ENCODE measurements at regions of chr2 and their contacts with region 1.

Region 1: DNA sequence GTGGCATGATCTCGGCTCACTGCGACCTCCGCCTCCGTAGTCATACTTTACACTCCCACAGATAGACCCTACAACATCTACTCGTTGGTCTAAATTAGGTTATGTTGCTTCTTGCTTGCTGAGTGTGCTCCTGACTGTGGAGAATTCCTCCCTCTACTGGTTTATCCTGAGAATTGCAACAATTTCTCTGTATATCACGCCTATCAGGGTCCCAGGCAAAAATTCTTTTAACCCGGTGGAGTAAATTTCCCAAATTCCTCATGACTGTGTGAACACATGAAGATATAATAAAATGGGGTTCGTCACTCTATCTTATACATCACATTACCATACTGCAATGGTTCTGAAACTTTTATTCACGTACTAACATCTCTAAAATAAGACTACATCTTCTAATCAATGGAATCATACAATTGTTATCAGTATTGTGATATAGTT is 156.7 kb downstream of the EVA1A start:
- DNase-seq: peak; percentile 61
- ATAC-seq: peak; percentile 97
- H3K4me3 ChIP-seq: no peak overlapping the region
- H3K27ac ChIP-seq: no peak overlapping the region
- H3K4me1 ChIP-seq: no peaks in the 10 kb centered on the region
- H3K27me3 ChIP-seq: no peaks in the 10 kb centered on the region
- CTCF ChIP-seq: peak; percentile 91
- EP300 ChIP-seq: no peak
- POLR2A ChIP-seq: no peak
- RAD21 ChIP-seq: peak; percentile 81

Region 2: DNA sequence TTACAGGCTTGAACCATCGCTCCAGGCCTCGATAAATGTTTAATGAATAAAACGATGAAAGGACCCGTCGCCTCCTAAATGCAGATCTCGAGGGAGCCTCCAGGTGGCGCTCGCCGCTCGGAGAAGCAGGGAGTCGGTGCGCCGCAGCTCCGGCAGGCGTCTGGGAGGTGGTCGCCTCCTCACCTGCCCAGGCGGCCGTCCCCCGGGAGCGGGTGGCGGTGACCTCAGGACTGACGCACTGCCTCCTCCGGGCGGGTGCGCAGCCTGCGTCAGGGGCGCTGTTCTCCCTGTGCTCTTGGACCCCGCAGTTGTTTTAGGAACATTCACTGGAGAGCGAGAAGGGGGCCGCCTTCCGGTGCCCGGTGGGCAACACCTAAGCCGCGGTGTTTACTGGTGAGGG is 484.2 kb before region 1 on chr2:
- CTCF ChIA-PET with region 1: interaction called, 3 read pairs
- POLR2A ChIA-PET with region 1: no interaction called
- in situ Hi-C with region 1: no loop called
- intact Hi-C with region 1: loop called (anchors 5 kb)
- DNase-seq: peak; percentile 31
- ATAC-seq: peak; percentile 13
- H3K4me3 ChIP-seq: peak overlapping the region in 2 of 3 experiments; percentile 7 to 41; a peak in 1 of 6 replicates
- H3K27ac ChIP-seq: no peak overlapping the region
- H3K4me1 ChIP-seq: peaks cover 84% of the 10 kb centered on the region
- H3K27me3 ChIP-seq: 0 out of 5 replicates have a peak, but pooled peaks cover 0 to 7% of the 10 kb centered on the region in 2 experiments
- CTCF ChIP-seq: peak; percentile 91
- EP300 ChIP-seq: no peak
- POLR2A ChIP-seq: no peak
- RAD21 ChIP-seq: peak; percentile 96

Region 3: DNA sequence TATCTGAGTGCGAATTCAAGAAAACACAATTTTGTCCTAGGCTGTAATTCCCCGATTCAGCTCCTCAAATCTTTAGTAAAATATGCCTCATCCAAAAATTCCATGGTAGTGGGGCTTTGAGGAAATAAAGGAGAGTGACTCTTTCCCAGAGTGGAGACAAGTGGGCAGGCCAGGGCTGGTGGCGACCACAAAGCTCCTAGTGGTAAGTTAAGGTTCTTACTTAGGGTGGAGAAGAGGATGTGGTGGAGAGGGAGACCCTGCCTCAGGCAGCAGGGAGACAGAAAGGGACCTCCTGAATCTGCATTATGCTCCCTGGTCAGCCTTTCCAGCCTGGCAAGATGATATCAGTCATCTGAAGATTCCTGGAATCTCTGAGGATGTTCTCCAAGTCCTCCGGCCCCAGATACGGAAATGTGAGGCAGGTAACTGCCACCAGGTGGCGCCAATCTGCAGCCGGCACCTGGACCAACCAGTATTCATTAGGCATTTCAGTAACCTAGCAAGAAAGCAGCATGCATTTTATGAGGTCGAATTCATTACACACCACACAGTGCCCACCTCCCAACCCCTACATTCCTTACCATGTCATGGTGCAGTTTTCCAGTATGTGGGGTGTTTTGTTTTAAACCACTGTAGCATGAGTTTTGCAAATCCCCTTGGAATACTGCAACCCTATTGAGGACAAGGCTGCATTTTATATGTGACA is 339.2 kb before region 1 on chr2:
- CTCF ChIA-PET with region 1: interaction called, 36 read pairs
- POLR2A ChIA-PET with region 1: no interaction called
- in situ Hi-C with region 1: loop called (anchors 10 kb)
- intact Hi-C with region 1: loop called (anchors 1 kb)
- DNase-seq: peak; percentile 32
- ATAC-seq: peak; percentile 85
- H3K4me3 ChIP-seq: no peak overlapping the region
- H3K27ac ChIP-seq: no peak overlapping the region
- H3K4me1 ChIP-seq: peaks cover 28% of the 10 kb centered on the region
- H3K27me3 ChIP-seq: no peaks in the 10 kb centered on the region
- CTCF ChIP-seq: peak; percentile 92
- EP300 ChIP-seq: no peak
- POLR2A ChIP-seq: no peak
- RAD21 ChIP-seq: peak; percentile 78

Region 4: DNA sequence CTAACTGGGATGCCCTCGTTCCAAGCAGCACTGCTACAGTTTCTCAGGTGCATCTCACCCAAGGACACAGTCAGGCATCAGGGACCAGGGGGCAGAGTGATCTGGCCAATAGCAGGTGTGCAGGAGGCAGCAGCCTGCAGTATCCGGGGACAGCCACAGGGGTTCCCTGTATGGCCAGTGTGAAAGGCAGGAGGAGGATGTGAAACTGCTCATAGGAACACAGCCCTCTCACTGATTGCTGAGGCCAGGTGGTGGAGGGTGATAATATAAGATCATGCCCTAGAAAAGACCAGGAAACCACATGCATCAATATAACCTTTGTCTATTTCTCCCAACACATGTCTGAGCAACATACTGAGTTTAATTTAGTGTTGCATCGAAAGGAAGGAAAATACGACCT is 92.0 kb before region 1 on chr2:
- CTCF ChIA-PET with region 1: no interaction called
- POLR2A ChIA-PET with region 1: no interaction called
- in situ Hi-C with region 1: loop called (anchors 5 kb)
- intact Hi-C with region 1: loop called (anchors 1 kb)
- DNase-seq: peak; percentile 22
- ATAC-seq: peak; percentile 99
- H3K4me3 ChIP-seq: no peak overlapping the region
- H3K27ac ChIP-seq: no peak overlapping the region
- H3K4me1 ChIP-seq: no peaks in the 10 kb centered on the region
- H3K27me3 ChIP-seq: no peaks in the 10 kb centered on the region
- CTCF ChIP-seq: 0 out of 2 replicates have a peak, but pooled peaks have one; percentile 30
- EP300 ChIP-seq: no peak
- POLR2A ChIP-seq: no peak
- RAD21 ChIP-seq: no peak